Left cardiac atrium (tissue), 4 donors: ENCODE measurements at regions of chr9 and their contacts with region 1.

Region 1: GRCh38 chr9:89278997-89279739 is 31.8 kb upstream of the CKS2 start:
- DNase-seq: no peak
- ATAC-seq: peak in 1 of 2 donors; percentile 24

Region 2: GRCh38 chr9:88593537-88594185 is 685.5 kb before region 1 on chr9:
- intact Hi-C with region 1: loop called in 1 of 2 experiments (anchors 10 kb)
- DNase-seq: peak; percentile 59
- ATAC-seq: peak; percentile 69 to 82

Region 3: DNA sequence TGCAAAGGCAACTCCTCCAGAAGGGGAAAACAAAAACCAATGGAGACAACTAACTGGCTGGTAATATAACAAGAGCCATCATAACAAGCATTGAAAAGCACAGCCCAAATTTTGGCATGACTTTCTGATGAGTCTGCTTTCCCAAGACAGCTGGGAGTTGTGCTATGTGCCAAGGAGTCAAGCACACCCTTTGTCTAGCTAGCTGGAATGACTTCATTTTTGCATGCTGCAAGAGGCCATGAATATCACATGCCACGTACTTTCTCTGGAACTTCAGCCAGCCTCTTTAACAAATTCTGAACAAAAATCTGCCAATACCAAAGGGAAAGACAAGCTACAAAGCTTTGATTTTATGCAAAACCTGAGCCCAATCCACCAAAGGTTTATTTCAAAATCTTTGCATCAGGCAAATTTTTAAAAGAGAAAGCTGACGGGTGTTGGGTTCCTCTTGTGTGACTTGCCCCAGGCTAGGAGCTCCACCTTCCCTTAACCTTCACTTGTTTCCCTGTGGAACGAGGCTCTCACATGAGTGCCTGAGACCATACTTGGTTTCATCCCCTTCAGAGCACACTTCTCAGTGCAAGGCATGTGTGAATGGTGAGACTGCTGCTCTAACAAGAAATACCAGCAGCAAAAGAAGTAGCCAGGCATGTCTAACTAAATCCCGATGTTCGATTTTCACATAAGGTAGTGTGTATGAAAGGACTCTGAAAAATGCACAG is 240.6 kb before region 1 on chr9:
- intact Hi-C with region 1: loop called in 1 of 2 experiments (anchors 10 kb)
- DNase-seq: peak; percentile 47
- ATAC-seq: peak; percentile 86 to 93

Region 4: DNA sequence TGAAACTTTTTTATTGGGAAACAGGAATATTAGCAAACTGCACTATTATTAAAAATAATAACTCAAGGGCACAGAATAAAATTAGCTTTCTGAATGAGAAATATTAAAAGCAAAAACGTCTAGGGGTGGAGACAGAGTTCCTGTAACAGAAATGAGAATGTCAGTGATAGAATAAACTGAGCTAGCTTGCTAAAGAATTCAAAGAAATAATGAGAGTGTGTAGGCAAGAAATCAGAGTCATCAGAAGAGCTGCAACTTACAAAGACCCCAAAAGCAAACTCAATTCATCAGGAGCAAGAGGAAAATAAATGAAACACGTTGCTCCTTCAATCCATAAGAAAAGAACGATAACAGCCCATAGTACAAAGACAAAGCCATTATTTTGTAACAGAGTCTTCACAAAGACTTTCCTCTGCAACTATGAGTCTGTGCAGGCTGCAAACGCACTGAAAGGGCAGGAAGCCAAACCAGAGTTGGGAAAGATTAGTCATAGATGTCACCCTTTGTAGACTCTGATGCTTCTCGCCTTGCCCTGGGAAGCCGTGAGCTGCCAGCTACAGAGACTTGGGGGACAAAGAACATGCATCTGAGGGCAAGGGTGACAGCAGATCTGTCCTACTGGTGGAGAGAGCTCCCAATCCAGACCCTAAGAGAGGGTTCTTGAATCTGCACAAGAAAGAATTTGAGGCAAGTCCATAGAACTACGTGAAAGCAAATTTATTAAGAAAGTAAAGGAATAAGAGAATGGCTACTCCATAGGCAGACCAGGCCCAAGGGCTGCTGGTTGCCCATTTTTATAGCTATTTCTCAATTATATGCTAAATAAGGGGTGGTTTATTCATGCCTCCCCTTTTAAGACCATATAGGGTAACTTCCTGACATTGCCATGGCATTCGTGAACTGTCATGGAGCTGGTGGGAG is 141.4 kb before region 1 on chr9:
- intact Hi-C with region 1: no loop called
- DNase-seq: peak; percentile 66
- ATAC-seq: peak; percentile 82 to 97